Activated T-helper 2 cell treated with anti-CD3 and anti-CD28 coated beads, Interferon-gamma antibody, Interleukin-2, Interleukin-4, amounts not matched to agents 10 μg/mL and 5 μg/mL and 100 μg/mL, durations not matched to agents 14 hours and 24 hours and 36 hours (primary cell): ENCODE measurements at regions of chr3 and their contacts with region 1.

Region 1: DNA sequence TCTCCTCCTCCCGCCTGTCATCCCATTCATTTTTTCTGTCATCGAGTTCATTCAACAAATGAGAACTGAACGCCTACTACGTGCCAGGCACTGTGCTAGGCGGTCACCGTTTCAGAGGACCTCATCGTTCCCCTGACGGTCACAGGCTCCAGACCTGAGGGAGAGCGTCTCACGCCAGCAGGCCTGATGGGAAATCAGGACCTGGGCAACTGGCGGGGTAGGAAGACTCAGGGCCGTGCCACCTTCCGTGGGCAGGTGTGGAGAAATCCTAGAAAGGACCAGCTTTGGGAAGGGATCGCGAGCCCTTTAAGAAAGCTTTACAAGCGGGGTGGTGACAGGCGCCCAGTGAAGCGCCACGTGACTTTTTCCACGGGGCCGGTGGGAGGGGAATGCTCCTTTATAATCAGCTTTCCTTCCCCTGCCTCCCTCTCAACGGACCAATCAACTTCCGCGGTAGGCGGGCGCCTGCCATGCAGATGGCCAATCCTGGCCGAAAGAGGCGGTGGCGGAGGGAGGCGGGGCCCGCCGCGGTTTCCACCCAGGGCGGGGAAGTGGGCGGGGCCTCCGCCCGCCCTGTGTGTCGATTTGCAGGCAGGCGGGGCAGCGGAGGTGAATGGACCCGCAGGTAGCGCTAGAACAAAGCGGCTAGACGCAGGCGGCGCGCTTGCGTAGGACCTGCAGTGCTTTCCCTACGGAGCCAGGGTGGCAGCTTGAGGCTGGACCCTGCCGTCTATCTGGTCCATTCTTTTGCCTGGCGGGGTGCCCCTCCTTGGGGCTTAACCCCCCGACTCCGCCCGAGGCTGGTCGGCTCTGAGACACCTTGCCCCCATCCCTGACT is 816 bp upstream of the DUSP7 start:
- DNase-seq: peak; percentile 99
- H3K4me3 Mint-ChIP-seq: peak overlapping the region; percentile 92
- H3K27ac Mint-ChIP-seq: peak overlapping the region; percentile 88
- H3K4me1 Mint-ChIP-seq: peaks cover 30% of the 10 kb centered on the region
- H3K27me3 Mint-ChIP-seq: no peaks in the 10 kb centered on the region

Region 2: GRCh38 chr3:51941798-51942602 is 115.2 kb before region 1 on chr3 and contains the starts of genes PARP3 and RRP9:
- intact Hi-C with region 1: loop called (anchors 1 kb)
- DNase-seq: peak; percentile 100
- H3K4me3 Mint-ChIP-seq: peak within 1 kb of the TSS; percentile 76
- H3K27ac Mint-ChIP-seq: peak within 1 kb of the TSS; percentile 86
- H3K4me1 Mint-ChIP-seq: peaks cover 22% of the 10 kb centered on the region
- H3K27me3 Mint-ChIP-seq: no peaks in the 10 kb centered on the region
- total RNA-seq, gene PARP3: 15.8 and 18.9 TPM in 2 replicates
- total RNA-seq, gene RRP9: 57.5 and 58.2 TPM in 2 replicates

Region 3: DNA sequence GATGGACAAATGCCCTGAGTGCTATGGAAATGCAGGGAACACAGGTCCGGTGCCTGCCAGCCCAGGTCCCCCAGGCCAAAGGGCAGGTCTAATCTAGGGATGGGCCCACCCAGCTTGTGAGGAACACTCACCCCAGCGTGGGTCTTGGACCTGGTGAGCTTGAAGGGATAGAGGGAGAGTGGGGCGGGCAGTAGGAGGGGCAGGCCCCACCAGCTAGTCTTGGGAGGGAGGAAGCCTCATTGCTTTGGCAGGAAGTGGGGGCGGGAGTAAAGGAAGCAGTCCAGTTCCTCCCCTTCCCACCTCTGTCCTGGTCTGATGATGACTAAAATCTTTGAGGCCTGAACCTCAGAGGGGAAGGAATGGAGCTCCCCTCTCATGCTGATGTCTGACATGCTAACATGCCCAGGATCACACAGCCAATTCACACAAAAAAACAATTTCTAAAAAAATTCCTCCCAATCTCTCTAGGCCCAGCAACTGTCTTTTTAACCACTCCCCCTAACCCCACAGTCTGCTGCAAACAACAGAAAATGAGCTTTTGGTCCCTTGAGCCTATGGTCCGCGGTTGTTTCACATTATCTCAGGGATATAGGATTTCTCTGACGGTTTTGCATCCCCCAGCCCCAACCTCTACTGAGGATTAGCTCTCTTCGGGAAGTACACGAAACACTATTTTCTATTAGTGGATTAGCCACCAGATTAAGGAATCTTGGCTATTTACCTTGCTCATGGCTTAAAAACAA is 29.9 kb after region 1 on chr3:
- intact Hi-C with region 1: loop called (anchors 2 kb)
- DNase-seq: no peak
- H3K4me3 Mint-ChIP-seq: no peak overlapping the region
- H3K27ac Mint-ChIP-seq: peak overlapping the region; percentile 84
- H3K4me1 Mint-ChIP-seq: peaks cover 25% of the 10 kb centered on the region
- H3K27me3 Mint-ChIP-seq: no peaks in the 10 kb centered on the region

Region 4: DNA sequence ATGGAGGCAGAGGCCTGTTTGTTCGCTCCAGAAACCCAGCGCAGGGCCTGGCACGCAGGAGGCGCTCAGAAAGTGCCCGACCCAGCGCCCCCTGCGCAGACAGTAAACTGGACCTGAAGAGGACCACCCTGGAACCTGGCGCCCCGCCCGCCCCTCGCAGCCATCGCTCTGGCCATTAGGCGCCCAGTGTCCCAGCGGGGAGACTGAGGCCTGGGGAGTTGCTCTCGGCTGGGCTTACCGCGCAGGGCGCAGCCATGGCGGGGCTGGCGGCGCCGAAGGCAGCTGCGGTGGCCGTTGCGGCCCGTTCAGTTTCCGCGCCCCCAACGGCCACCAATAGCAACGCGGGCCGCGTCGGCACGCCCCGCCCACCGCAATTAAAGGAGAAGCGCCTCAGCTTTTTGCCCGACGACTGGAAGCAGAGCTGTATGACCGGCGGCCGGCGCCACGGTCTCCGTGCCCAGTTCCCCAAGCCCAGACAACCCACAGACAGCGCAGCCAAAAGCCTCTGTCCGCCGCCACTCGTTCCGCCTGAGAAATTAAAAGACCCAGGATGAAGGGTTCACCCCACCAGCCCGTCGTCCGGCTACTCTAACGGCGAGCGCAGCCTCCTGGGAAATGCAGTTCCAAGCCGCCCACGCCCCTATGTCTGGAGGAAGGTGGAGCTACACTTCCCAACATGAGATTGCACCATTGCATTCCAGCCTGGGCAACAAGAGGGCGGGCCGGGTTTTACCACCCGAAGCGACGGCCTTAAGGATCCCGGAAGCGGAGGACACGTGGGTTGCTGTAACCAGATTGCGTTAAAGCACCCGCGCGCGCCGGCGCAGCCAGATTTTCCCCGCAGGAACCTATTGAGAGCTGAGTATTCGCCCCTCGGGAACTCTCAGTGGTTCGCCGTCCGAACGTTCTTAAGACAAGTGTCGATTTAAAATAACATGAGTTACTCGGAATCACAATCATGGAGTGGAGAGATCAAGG is 97.2 kb after region 1 on chr3 and contains the start of gene POC1A:
- intact Hi-C with region 1: loop called (anchors 1 kb)
- DNase-seq: peak; percentile 88
- H3K4me3 Mint-ChIP-seq: peak within 1 kb of the TSS; percentile 90
- H3K27ac Mint-ChIP-seq: peak within 1 kb of the TSS; percentile 92
- H3K4me1 Mint-ChIP-seq: peaks cover 16% of the 10 kb centered on the region
- H3K27me3 Mint-ChIP-seq: peaks cover under 1% of the 10 kb centered on the region
- total RNA-seq, gene POC1A: 20.4 and 22.2 TPM in 2 replicates

Region 5: GRCh38 chr3:52278510-52279069 is 221.4 kb after region 1 on chr3 and contains the start of gene WDR82:
- intact Hi-C with region 1: loop called (anchors 10 kb)
- DNase-seq: peak; percentile 95
- H3K4me3 Mint-ChIP-seq: peak within 1 kb of the TSS; percentile 98
- H3K27ac Mint-ChIP-seq: peak within 1 kb of the TSS; percentile 99
- H3K4me1 Mint-ChIP-seq: peaks cover 57% of the 10 kb centered on the region
- H3K27me3 Mint-ChIP-seq: no peaks in the 10 kb centered on the region
- total RNA-seq, gene WDR82: 101 and 103 TPM in 2 replicates

Region 6: DNA sequence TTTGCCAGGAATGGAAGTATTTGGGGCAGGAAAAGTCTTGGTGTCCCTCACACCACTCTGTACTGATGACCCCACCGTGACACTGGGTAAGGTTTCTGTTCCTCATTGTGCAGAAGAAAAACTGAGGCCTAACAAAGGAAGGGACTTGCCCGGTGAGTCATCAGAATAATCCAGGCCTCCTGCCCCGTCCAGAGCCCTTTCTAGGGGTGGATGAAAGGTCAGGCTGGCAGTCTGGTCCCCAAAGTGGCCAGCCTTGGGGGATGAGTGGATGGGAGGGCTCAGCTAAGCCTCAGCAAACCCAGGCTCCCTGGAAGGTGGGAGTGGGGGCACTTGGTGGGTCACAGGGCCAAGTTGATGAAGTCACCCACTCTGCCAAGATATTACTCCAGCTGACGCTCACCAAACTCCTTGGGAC is 256.6 kb after region 1 on chr3:
- intact Hi-C with region 1: no loop called
- DNase-seq: no peak
- H3K4me3 Mint-ChIP-seq: no peak overlapping the region
- H3K27ac Mint-ChIP-seq: peak overlapping the region; percentile 58
- H3K4me1 Mint-ChIP-seq: peaks cover 26% of the 10 kb centered on the region
- H3K27me3 Mint-ChIP-seq: no peaks in the 10 kb centered on the region

Region 7: GRCh38 chr3:52685709-52686691 is 628.8 kb after region 1 on chr3 and contains the starts of genes GNL3 and PBRM1:
- intact Hi-C with region 1: loop called (anchors 10 kb)
- DNase-seq: peak; percentile 94
- H3K4me3 Mint-ChIP-seq: peak within 1 kb of the TSS; percentile 99
- H3K27ac Mint-ChIP-seq: peak within 1 kb of the TSS; percentile 99
- H3K4me1 Mint-ChIP-seq: peaks cover 46% of the 10 kb centered on the region
- H3K27me3 Mint-ChIP-seq: no peaks in the 10 kb centered on the region
- total RNA-seq, gene GNL3: 226 and 235 TPM in 2 replicates
- total RNA-seq, gene PBRM1: 60.4 and 66.3 TPM in 2 replicates